Activated CD4-positive, alpha-beta memory T cell treated with anti-CD3 and anti-CD28 coated beads, Interleukin-2, amount 10 ng/mL, durations not matched to agents 7 days and 5 days (primary cell): ENCODE measurements at regions of chr7 and their contacts with region 1.

Region 1: GRCh38 chr7:27196287-27196767 is 3.6 kb downstream of the HOXA13 start:
- DNase-seq: peak; percentile 81
- H3K4me3 Mint-ChIP-seq: no peak overlapping the region
- H3K27ac Mint-ChIP-seq: no peak overlapping the region
- H3K4me1 Mint-ChIP-seq: peaks cover 28% of the 10 kb centered on the region
- H3K27me3 Mint-ChIP-seq: peaks cover 82% of the 10 kb centered on the region

Region 2: DNA sequence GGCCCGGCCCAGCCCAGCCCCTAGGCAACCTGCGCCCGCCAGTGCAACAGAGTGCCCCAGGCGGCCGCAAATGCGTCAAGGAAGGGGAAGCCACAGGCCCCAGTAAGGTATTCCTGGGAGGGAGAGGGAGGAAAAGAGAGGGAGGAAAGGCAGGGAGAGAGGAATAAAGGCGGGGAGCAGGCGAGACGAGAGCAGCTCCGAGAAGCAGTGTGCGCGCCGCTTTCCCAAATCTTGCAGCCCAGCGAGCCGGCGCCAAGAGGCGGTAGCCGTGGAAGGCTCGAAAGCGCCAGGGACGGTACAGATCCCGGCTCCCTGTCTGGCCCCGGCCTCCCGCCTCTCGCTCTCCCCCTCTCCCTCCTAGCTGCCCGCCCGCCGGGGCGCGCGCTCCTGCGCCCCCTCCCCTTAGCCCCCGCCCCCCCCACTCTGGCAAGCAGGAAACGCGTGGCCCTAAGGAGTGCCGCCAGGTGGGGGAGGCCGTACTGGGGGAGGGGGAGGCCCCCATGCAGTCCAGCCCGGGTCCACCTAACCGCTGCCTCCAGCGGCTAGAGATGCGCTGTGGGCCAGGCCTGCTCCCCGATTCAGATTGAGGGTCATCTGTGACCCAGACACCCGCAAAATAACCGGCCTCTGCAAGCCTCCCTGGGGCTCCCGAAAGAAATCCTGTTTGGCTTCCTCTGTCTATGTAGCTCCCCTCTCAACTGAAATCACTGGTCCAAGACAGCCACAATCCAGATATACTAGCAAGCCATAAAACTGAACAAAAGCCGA is 26.5 kb before region 1 on chr7:
- CTCF ChIA-PET with region 1: no interaction called
- POLR2A ChIA-PET with region 1: no interaction called
- DNase-seq: no peak
- H3K4me3 Mint-ChIP-seq: no peak overlapping the region
- H3K27ac Mint-ChIP-seq: no peak overlapping the region
- H3K4me1 Mint-ChIP-seq: peaks cover 15% of the 10 kb centered on the region
- H3K27me3 Mint-ChIP-seq: peaks cover 71% of the 10 kb centered on the region

Region 3: DNA sequence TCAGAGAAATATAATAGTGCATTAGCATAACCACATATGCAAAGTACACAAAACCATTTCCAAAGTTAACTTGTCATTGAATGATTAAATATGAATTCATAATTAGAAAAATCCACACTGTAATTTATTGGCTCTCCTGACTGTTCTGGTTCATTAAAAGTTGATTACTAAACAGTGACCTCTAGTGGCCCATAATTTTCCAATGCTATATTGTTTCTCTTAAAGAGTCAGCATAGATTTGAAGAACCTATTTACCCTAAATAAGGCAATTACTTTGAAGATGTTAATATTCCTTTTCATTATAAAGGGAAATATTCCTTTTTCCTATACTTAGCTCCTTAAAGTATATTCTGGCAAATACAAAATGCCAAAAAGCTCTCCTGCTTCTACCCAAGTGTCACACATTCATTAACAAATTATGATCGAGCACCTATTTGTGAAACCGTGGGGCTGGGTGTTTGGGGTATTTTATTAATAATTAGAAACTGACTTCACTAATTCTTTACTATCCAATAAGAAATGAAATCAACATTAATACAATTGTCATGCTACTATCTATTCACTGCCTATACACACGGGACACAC is 380.1 kb after region 1 on chr7:
- CTCF ChIA-PET with region 1: interaction called, 13 read pairs
- POLR2A ChIA-PET with region 1: no interaction called
- DNase-seq: no peak
- H3K4me3 Mint-ChIP-seq: no peak overlapping the region
- H3K27ac Mint-ChIP-seq: no peak overlapping the region
- H3K4me1 Mint-ChIP-seq: no peaks in the 10 kb centered on the region
- H3K27me3 Mint-ChIP-seq: no peaks in the 10 kb centered on the region

Region 4: DNA sequence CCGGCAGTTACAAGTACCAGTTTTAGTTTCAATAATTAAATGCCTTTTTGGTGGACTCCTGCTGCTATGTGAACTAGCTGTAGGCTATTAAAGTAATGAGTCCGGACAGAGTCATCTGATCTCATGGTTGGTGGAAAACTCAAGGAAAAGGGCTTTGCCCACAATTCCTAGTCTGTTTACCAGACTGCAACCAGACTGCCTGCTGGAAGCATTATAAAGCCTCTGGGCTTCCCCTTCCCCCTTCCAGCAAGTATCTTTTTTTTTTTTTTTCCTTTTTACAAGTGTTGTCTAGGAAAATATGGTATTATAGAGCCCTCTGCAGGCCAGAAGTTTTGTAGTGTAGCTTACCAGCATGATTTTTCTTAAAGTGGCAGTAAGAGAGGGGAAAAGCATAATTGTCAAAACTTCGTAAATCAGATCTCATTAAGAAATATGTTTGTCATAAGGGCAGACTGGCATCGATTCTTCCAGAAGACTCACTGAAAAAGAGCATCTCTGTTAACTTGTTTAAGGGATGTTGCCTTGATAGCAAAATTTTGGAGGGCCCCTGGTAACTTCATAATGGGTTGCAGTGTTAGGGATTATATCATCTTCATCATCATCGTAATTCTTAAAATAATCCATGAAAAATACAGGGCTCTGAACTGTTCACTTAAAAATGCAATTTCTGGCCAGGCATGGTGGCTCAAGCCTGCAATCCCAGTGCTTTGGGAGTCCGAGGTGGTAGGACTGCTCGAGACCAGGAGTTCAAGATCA is 724.9 kb after region 1 on chr7:
- CTCF ChIA-PET with region 1: interaction called, 23 read pairs
- POLR2A ChIA-PET with region 1: no interaction called
- DNase-seq: no peak
- H3K4me3 Mint-ChIP-seq: no peak overlapping the region
- H3K27ac Mint-ChIP-seq: no peak overlapping the region
- H3K4me1 Mint-ChIP-seq: peaks cover 8% of the 10 kb centered on the region
- H3K27me3 Mint-ChIP-seq: no peaks in the 10 kb centered on the region

Region 5: DNA sequence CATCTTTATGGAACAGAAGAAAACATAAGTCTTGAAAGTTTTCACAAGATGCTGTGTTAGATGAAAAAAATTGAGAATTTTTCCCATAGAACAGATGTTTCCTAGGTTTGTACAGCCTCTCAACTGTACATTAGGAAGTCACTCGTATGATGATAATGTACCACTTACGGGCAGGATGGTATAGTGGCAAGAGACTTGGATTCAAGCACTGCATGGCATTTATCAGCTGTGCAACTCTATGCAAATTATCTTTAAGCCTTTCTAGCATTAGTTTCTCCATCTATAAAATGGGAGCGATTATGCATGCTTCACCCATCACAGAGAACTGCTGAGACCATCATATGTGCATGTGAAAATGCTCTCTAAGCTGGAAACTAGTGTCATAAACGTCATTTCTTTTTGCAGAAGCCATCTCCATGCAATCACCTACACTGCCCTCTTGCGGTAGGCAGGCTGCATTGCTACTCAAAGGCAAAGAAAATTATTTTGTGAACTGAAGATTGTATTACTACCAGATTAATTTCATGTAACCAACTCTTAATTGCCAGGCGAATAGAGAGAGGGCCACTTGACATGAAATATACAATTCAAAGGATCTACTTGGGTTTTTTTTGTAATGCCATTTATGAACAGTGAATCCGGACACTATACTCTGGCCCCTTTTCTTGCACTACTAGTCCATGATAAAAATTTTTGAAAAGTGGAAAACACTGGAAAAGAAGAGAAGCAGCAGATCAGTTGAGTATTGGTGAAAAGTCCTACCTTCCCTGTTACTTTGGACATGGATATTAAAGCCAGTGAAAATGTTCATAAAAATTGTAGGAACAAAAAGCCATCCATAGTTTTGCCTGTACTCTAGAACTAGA is 881.9 kb after region 1 on chr7:
- CTCF ChIA-PET with region 1: interaction called, 12 read pairs
- POLR2A ChIA-PET with region 1: no interaction called
- DNase-seq: peak; percentile 51
- H3K4me3 Mint-ChIP-seq: no peak overlapping the region
- H3K27ac Mint-ChIP-seq: no peak overlapping the region
- H3K4me1 Mint-ChIP-seq: no peaks in the 10 kb centered on the region
- H3K27me3 Mint-ChIP-seq: no peaks in the 10 kb centered on the region